ENCODE measurements at regions of chr5 and their contacts with region 1.

Region 1: GRCh38 chr5:112270299-112271293 is 148.5 kb downstream of the EPB41L4A start:
- DNase-seq: no peak
- H3K4me3 ChIP-seq: no peak overlapping the region
- H3K27ac ChIP-seq: no peak overlapping the region
- H3K4me1 ChIP-seq: no peaks in the 10 kb centered on the region
- H3K27me3 ChIP-seq: no peaks in the 10 kb centered on the region
- CTCF ChIP-seq: no peak

Region 2: GRCh38 chr5:111757355-111758283 is 513.0 kb before region 1 on chr5:
- CTCF ChIA-PET with region 1: no interaction called
- POLR2A ChIA-PET with region 1: no interaction called
- intact Hi-C with region 1: no loop called
- DNase-seq: peak; percentile 95
- H3K4me3 ChIP-seq: peak overlapping the region; percentile 57
- H3K27ac ChIP-seq: peak overlapping the region; percentile 79
- H3K4me1 ChIP-seq: peaks cover 4% of the 10 kb centered on the region
- H3K27me3 ChIP-seq: no peaks in the 10 kb centered on the region
- CTCF ChIP-seq: 0 out of 2 replicates have a peak, but pooled peaks have one; percentile 34

Region 3: DNA sequence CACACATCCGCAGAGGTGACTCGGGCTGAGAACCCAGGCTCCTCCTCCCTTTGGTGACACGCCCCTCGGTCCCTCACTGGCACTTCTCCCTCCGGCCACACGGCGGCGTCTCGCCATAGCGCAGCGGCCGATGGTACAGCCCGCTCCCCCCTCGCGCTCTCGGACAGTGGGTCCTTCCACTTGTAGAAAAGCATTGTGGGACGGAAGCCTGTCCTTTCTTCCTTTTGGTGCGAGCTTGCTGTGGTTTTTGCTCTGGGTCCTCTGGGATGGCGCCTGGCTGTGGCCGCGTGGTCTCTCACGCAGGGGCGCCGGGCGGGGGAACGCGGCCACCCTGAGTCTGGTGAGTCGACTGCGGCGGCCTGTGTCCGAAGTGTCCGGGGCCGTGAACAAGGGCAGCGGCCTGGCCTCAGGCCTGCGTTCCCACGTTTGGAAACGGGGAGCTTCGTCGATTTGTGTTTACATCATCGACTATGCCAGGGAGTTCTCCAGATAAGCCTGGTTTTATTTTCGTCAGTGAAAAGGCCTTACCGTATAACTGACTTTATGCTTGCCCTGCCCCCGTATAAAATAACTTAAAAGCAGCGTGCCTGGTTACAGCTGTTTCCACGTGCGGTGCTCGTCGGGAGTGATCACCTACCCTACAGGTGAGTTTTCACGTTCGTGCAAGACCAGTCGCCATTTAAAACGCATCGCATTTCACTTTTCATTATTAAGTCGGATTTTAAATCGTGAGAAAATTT is 109.8 kb before region 1 on chr5:
- CTCF ChIA-PET with region 1: no interaction called
- POLR2A ChIA-PET with region 1: interaction called, 10 read pairs
- intact Hi-C with region 1: no loop called
- DNase-seq: peak; percentile 91
- H3K4me3 ChIP-seq: peak overlapping the region; percentile 67
- H3K27ac ChIP-seq: peak overlapping the region; percentile 81
- H3K4me1 ChIP-seq: peaks cover 6% of the 10 kb centered on the region
- H3K27me3 ChIP-seq: no peaks in the 10 kb centered on the region
- CTCF ChIP-seq: peak; percentile 99